ENCODE measurements at regions of chr22 and their contacts with region 1.

Region 1: DNA sequence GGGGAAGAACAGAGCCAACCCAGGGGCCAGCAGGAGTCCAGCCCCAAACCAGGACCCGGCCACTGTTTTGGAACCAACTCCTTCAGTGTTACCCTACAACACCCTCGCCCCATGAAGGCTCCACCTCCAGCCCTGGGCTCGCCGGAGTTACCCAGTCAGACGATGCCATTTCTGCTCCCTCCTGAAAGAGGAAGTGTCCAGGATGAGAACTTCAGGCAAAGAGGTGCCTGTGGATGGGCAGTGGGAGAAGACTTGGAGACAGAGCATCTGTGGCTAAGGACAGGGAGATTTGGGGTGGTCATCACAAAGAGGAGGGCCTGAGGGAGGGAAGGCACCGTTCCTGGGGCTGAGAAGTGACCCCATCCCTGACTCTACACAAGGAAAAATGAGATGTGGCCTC is 14.0 kb downstream of the APOBEC3B start:
- DNase-seq: no peak

Region 2: DNA sequence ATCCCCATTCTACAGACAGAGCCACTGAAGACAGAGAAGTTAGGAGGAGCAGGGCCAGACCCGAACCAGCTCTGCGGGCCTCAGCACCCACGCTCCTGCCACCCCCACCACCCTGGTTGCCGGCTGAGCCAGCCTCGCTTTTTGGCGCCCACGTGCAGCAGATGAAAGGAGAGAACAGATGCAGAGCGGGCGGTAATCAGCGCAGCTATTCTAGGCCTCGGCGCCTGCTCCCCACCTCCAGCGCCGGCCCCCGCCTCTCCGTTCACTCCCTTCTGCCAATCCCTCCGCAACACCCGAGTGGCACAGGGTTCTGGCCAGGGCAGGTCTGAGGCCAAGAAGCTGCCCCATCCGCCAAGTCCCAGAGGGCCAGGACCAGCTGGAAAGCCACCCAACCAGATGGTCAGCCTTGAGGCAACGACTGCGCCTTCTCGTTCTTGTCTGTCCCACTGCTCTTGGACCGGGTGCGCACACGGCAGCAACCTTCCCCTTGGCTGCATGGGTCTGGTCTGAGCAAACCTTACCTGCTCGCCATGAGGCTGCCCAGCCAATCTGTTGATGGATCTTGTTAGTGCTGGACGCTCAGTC is 218.9 kb before region 1 on chr22:
- intact Hi-C with region 1: loop called in 1 of 2 experiments (anchors 10 kb)
- DNase-seq: no peak

Region 3: DNA sequence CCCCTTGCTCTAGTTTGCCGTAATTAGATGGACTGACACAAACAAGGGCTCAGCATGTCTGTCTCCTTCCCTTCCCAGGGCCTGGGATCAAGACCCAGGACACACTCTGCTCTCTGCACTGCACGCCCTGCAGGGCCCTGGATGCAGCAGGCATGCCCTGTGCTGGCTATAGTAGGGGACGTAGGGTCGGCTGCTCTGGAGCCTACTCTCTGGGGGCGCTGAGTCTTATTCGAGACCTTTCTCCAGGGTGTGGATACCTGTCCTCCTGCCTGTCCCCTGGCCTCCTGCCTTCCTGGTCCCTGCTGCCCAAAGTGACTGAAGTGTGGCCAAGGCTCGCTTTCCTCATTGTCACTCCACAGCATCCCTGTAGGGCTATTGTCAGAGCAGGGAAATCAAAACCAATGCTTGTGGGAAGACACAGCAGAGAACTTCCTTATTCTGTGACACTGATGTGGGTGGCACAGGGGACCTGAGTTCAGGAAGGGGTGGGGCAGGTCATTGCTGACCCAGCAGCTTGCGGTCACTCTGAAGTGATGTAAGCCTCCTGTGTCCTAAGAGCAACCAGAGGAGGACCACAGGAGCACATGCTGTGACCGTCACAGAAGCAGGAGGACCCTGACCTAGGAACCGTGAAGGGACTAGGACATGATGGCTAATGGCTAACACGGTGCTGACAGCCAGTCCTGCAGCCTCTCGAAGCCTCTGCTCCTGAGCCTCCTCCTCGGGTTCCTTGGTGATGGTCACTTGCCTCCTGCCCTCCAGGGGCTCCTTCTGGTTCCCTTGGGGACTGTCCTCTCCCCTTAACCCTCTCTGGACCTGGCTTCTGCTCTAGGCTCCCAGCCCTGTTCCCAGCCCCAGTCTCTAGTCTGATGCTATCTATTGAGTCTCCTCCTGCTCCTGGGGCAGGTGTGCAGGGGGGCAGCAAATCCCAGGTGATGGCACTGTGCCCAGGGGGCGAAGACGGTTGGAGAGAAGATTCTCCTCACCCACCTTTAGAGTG is 28.4 kb before region 1 on chr22:
- intact Hi-C with region 1: loop called in 1 of 2 experiments (anchors 2 kb)
- DNase-seq: peak; percentile 85

Region 4: DNA sequence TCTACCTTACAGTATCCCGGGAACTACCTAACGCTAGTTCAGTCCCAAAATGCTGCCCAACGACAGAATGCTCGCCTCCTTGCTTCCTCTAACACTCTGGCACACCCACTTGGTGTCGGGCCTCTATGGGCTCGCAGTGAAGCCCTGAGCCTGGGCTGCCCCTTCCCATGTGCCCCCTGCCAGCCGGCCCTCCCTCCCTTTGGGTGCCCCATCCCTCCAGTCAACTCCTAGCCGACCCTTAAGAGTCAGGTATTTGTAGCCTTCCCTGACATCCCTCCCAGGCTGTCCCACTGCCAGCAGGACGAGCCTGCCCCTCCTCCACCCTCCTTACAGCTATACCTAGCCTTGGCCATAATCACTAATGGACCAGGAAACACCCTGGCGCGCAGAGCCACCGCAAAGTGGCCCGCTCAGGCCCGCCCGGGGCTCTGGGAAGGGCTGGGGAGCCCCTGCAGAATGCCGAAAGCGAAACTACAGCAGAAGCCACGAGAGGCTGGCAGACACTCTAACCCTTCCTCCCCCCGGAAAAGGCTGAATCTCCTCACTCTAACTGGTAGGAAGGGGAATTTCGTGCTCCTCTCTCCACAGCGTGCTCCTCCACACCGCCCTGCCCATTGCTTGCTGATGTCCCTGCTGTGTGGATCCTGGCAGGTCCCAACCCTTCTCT is 148.1 kb after region 1 on chr22:
- intact Hi-C with region 1: no loop called
- DNase-seq: peak; percentile 82

Region 5: GRCh38 chr22:40721266-40721665 is 1725.2 kb after region 1 on chr22:
- intact Hi-C with region 1: no loop called
- DNase-seq: no peak

Region 6: GRCh38 chr22:40818747-40819598 is 1822.9 kb after region 1 on chr22 and contains the start of gene SLC25A17:
- intact Hi-C with region 1: no loop called
- DNase-seq: peak; percentile 95
- total RNA-seq, gene SLC25A17: 11.7 to 13.4 TPM

Measured in posterior vena cava (tissue), 2 donors.